ENCODE measurements at regions of chr19 and their contacts with region 1.

Region 1: DNA sequence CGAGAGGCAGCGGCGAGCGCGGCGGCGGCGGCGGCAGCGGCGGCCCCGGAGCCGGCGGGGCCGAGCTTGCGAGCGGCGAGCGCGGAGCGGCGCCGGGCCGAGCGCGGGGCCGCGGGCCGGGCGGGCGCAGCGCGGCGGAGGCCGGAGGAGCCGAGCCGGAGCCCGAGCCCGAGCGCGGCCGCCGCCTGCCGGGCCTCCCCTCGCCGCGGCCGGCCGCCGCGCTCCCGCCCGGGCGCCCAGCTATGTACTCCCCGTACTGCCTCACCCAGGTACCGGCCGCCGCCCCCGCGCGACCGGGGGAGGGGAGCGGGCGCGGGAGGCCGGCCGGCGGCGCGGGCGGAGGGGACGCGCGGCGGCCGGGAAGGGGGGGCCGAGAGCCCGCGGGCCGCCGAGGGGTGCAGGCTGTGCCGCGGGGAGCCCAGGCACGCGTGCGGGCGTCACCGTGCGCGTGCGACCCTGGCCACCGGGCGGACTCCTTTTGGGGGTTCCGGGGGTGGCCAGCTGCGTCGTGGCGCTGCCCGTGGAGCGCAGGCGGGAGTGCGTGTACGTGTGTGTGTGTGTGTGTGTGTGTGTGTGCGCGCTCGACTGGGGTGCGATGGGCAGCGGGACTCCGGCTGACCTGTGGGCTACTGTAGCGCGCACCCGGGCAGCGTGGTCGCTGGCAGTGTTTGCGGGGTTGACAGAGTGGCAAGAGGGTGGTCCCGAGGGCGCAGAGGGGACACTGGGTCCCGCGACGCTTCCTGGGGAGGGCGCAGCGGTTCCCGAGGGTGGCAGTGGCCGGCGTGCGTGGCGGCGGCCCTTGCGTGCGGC is 526 bp downstream of the NFIX start:
- DNase-seq: peak in 5 of 7 donors; percentile 41 to 62 (median 55)
- H3K4me3 ChIP-seq: peak overlapping the region in 3 of 4 donors; percentile 33 to 65 (median 36)
- H3K27ac ChIP-seq: peak overlapping the region in 4 of 5 donors; percentile 31 to 92 (median 65)
- H3K4me1 ChIP-seq: peaks cover 8% of the 10 kb centered on the region in 2 donors
- H3K27me3 ChIP-seq: no peaks in the 10 kb centered on the region
- CTCF ChIP-seq: peak in 1 of 6 experiments; percentile 8
- POLR2A ChIP-seq: no peak

Region 2: GRCh38 chr19:12872941-12873890 is 122.6 kb before region 1 on chr19:
- intact Hi-C with region 1: no loop called
- DNase-seq: peak; percentile 87 to 97 (median 95)
- H3K4me3 ChIP-seq: peak overlapping the region in 1 of 4 donors; percentile 30
- H3K27ac ChIP-seq: peak overlapping the region in 3 of 5 donors; percentile 13 to 70 (median 67)
- H3K4me1 ChIP-seq: peaks cover 0 to 6% of the 10 kb centered on the region in 2 donors
- H3K27me3 ChIP-seq: no peaks in the 10 kb centered on the region
- CTCF ChIP-seq: no peak
- POLR2A ChIP-seq: peak in 1 of 2 donors; percentile 65

Region 3: GRCh38 chr19:13010038-13010991 is 14.5 kb after region 1 on chr19:
- intact Hi-C with region 1: loop called in 1 of 2 experiments (anchors 2 kb)
- DNase-seq: no peak
- H3K4me3 ChIP-seq: no peak overlapping the region
- H3K27ac ChIP-seq: peak overlapping the region in 1 of 5 donors; percentile 3
- H3K4me1 ChIP-seq: peaks cover 20 to 35% of the 10 kb centered on the region in 2 donors
- H3K27me3 ChIP-seq: no peaks in the 10 kb centered on the region
- CTCF ChIP-seq: no peak
- POLR2A ChIP-seq: no peak

Measured in adrenal gland (tissue), 19 donors.